Psoas muscle (tissue), 8 donors: ENCODE measurements at regions of chr18 and their contacts with region 1.

Region 1: DNA sequence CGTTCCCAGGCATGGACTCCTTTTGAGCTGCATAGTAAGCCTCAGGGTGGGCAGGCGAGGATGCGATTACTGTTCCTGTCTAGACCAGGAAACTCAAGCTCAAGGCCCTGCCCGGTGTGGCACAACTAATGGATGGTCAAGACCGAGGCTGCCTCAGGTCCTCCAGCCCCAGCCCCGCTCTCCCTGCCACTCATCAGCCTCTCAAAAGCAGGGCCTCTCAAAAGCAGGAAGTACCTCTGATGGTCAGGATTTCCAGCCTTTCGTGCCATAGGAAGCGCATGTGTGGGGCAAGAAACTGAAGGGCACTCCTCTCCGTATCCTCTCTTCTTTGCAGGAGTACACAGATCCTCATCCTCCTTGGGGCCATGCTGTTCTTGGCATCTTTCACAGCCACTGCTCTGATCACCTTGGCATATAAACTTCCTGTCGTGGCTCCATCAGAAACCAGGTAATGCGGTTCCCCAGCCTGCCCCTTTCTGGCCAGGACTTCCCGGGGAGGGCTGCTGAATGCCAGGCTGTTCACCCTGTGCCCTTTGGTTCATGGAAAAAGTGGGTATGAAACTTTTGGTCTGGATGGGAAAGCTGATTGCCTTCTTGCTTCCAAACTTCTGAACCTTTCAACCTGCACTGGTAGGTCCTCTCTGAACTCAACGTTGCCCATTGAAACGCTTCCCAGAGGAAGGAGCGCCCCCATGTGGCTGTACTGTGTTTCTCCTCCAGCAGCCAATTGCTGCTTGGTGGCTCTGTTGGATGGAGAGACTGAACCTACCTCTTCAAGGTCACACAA is 82.8 kb upstream of the SEC11C start:
- DNase-seq: peak; percentile 73 to 85
- ATAC-seq: peak; percentile 74 to 80 (median 79)
- H3K4me3 ChIP-seq: no peak overlapping the region
- H3K27ac ChIP-seq: no peak overlapping the region
- H3K4me1 ChIP-seq: peaks cover 21% of the 10 kb centered on the region
- H3K27me3 ChIP-seq: no peaks in the 10 kb centered on the region
- CTCF ChIP-seq: peak; percentile 88

Region 2: GRCh38 chr18:58788971-58789875 is 267.7 kb before region 1 on chr18:
- intact Hi-C with region 1: loop called in 1 of 2 experiments (anchors 2 kb)
- DNase-seq: peak; percentile 28 to 58
- ATAC-seq: no peak
- H3K4me3 ChIP-seq: no peak overlapping the region
- H3K27ac ChIP-seq: peak overlapping the region; percentile 52
- H3K4me1 ChIP-seq: peaks cover 39% of the 10 kb centered on the region
- H3K27me3 ChIP-seq: no peaks in the 10 kb centered on the region
- CTCF ChIP-seq: no peak

Region 3: DNA sequence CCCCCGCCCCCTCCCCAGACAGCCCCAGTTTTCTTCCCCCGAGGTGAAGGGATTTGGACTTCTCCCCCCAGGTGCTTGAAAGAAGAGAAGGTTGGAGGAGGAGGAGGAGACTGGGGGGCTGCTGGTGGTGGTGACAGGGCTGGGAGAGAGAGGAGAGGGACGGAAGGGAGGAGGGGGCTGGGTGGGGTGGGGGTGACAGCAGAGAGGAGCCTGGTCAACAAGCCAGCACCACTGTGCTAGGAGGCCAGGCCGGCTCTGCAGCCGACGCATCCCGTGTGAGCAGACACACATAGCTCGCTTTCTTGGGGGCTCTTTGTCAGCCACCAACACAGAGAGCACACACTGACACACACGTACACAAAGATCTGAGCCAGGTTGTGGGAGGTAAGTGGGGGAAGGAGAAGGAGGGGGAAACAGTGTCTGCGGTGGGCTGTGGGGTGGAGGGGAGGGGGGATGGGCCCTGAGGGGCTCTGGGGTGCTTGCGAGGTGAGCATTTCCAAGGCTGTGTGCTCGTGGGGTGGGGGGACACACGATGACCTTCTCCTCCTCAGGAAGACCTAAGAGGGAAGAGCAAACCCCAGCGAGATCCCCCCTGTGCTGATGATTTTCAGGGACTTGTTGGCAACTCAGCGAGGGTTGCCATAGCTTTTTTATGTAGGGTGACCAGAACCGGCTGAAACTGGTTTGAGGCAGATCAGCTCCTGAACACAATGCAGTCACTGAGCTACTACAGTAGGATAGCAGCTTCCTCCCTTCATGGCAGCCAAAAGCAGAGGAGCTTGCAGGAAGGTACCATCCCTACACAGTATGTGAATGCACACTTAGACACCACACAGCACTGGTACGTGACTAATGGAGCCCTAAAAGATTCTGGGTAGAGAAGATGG is 192.5 kb before region 1 on chr18 and contains the start of gene ZNF532:
- intact Hi-C with region 1: loop called in 1 of 2 experiments (anchors 5 kb)
- DNase-seq: no peak
- ATAC-seq: peak; percentile 24 to 51 (median 32)
- H3K4me3 ChIP-seq: peak within 1 kb of the TSS; percentile 73
- H3K27ac ChIP-seq: peak within 1 kb of the TSS; percentile 99
- H3K4me1 ChIP-seq: peaks cover 76% of the 10 kb centered on the region
- H3K27me3 ChIP-seq: no peaks in the 10 kb centered on the region
- CTCF ChIP-seq: no peak
- total RNA-seq, gene ZNF532: 68.8 to 105 (median 84.7) TPM

Region 4: GRCh38 chr18:59002974-59003594 is 53.8 kb before region 1 on chr18:
- intact Hi-C with region 1: loop called in 1 of 2 experiments (anchors 5 kb)
- DNase-seq: no peak
- ATAC-seq: no peak
- H3K4me3 ChIP-seq: no peak overlapping the region
- H3K27ac ChIP-seq: no peak overlapping the region
- H3K4me1 ChIP-seq: peaks cover 23% of the 10 kb centered on the region
- H3K27me3 ChIP-seq: no peaks in the 10 kb centered on the region
- CTCF ChIP-seq: no peak

Region 5: DNA sequence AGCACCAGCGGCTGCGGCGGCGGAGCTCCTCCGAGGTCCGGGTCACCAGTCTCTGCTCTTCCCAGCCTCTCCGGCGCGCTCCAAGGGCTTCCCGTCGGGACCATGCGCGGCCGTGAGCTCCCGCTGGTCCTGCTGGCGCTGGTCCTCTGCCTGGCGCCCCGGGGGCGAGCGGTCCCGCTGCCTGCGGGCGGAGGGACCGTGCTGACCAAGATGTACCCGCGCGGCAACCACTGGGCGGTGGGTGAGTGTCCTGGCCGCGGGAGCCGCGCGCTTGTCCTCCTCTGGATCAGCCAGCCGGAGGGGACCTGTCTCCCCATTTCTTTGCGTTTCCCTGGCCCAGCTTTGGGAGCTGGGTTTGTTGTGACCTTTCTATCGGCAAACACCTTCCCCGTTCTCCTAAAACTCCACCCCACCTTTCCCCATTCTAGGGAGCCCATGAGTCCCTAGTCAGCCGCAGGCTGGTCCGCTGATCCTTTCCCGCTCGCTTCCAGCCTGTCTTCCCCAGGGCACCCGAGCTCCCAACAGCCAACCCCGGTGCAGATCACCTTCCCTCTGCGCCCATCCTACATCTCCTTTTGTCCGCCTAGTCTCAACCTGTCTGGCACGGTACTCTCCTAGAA is 163.4 kb after region 1 on chr18:
- intact Hi-C with region 1: no loop called
- DNase-seq: no peak
- ATAC-seq: no peak
- H3K4me3 ChIP-seq: no peak overlapping the region
- H3K27ac ChIP-seq: no peak overlapping the region
- H3K4me1 ChIP-seq: no peaks in the 10 kb centered on the region
- H3K27me3 ChIP-seq: peaks cover 0 to 67% (median 22%) of the 10 kb centered on the region in 3 donors
- CTCF ChIP-seq: no peak